Sigmoid colon (tissue), 7 donors: ENCODE measurements at regions of chr7 and their contacts with region 1.

Region 1: DNA sequence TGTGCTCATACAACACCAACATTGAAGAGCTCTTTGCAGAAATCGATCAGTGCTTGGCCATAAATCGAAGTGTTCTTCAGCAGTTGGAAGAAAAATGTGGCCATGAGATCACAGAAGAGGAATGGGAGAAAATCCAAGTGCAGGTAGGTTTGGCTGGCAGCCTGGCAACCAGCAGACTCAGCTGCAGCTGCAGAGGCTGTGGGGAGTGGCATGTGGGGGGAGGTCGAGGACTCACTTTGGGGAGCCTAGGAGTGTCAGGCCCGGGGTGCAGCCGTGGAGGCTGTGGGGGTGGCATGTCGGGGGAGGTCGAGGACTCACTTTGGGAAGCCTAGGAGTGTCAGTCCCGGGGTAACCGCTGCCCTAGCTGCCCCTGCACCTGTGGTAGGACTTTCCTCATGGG is 35.1 kb downstream of the RNF32 start:
- DNase-seq: no peak
- H3K4me3 ChIP-seq: no peak overlapping the region
- H3K27ac ChIP-seq: no peak overlapping the region
- H3K4me1 ChIP-seq: peaks cover 0 to 14% (median 0%) of the 10 kb centered on the region in 4 donors
- H3K27me3 ChIP-seq: no peaks in the 10 kb centered on the region
- CTCF ChIP-seq: no peak
- EP300 ChIP-seq: no peak
- POLR2A ChIP-seq: no peak

Region 2: GRCh38 chr7:156612930-156613329 is 62.8 kb before region 1 on chr7:
- intact Hi-C with region 1: no loop called
- DNase-seq: no peak
- H3K4me3 ChIP-seq: no peak overlapping the region
- H3K27ac ChIP-seq: no peak overlapping the region
- H3K4me1 ChIP-seq: peaks cover 0 to 11% (median 7%) of the 10 kb centered on the region in 4 donors
- H3K27me3 ChIP-seq: peaks cover 0 to 44% (median 26%) of the 10 kb centered on the region in 3 donors
- CTCF ChIP-seq: no peak
- EP300 ChIP-seq: no peak
- POLR2A ChIP-seq: no peak

Region 3: GRCh38 chr7:156735851-156736250 is 60.1 kb after region 1 on chr7:
- intact Hi-C with region 1: loop called (anchors 10 kb)
- DNase-seq: no peak
- H3K4me3 ChIP-seq: no peak overlapping the region
- H3K27ac ChIP-seq: no peak overlapping the region
- H3K4me1 ChIP-seq: no peaks in the 10 kb centered on the region
- H3K27me3 ChIP-seq: no peaks in the 10 kb centered on the region
- CTCF ChIP-seq: no peak
- EP300 ChIP-seq: no peak
- POLR2A ChIP-seq: no peak